SK-N-SH (cell line): ENCODE measurements at regions of chr10 and their contacts with region 1.

Region 1: DNA sequence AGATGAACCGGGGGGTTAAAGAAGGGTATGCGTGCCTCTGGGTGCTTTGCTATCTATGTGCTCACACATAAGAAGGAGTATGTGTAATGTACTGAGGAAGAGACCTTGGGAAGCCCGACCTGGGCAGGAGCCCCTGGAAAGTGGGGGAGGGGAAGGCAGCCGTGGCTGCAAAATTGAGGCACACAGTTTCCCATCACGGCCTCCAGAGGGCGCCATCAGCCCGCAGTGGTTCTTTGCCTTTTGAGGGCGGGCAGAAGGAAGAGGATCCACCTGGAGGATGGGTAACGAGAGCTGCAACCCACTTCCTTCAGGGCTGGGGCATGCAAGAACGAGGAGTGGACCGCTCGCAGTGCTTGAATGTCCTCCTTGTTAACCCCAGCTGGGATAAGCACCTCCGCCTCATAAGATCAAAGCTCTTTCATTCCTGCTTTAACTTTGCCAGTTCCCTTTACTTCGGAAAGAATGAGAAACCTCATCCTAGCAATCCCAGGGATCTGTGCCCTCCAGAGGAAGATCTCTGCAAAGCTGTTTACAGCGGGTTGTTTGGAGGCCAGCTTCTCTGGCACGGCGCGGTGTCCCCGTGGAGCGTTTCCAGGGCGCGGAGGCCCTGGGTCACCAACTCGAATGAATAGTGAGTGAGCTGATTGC is 77.9 kb downstream of the PCGF5 start:
- DNase-seq: peak; percentile 82
- H3K4me3 ChIP-seq: no peak overlapping the region
- H3K27ac ChIP-seq: no peak overlapping the region
- H3K4me1 ChIP-seq: peaks cover 9 to 18% of the 10 kb centered on the region in 2 experiments
- H3K27me3 ChIP-seq: no peaks in the 10 kb centered on the region
- CTCF ChIP-seq: peak; percentile 87
- EP300 ChIP-seq: no peak
- RAD21 ChIP-seq: peak; percentile 95

Region 2: GRCh38 chr10:91287276-91287675 is 11.1 kb before region 1 on chr10:
- CTCF ChIA-PET with region 1: interaction called, 71 read pairs
- POLR2A ChIA-PET with region 1: no interaction called
- DNase-seq: no peak
- H3K4me3 ChIP-seq: no peak overlapping the region
- H3K27ac ChIP-seq: no peak overlapping the region
- H3K4me1 ChIP-seq: no peaks in the 10 kb centered on the region; a peak in 1 of 4 replicates
- H3K27me3 ChIP-seq: no peaks in the 10 kb centered on the region
- CTCF ChIP-seq: no peak
- EP300 ChIP-seq: no peak
- RAD21 ChIP-seq: no peak

Region 3: DNA sequence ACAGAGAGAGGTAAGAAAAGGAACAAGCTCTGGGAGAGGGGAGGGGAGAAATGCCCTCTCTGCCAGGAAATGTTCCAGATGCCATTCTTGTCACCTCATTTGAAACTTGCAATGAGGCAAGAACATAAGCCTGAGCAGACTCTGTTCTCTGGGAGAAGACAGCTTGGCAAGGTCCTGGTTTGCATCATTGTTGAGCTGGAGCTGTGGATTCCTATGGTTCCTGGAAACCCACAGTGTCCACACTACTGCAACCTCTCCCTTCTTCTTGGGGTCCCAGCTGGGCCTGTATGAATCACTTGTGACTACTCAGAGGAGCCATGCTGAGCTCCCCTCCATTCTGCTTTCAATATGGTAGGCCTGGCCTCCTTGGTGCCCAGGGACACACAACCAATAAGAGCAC is 51.0 kb after region 1 on chr10:
- CTCF ChIA-PET with region 1: interaction called, 13 read pairs
- POLR2A ChIA-PET with region 1: no interaction called
- DNase-seq: no peak
- H3K4me3 ChIP-seq: no peak overlapping the region
- H3K27ac ChIP-seq: peak overlapping the region; percentile 11 to 89; a peak in 3 of 4 replicates
- H3K4me1 ChIP-seq: peaks cover 0 to 33% of the 10 kb centered on the region in 2 experiments
- H3K27me3 ChIP-seq: no peaks in the 10 kb centered on the region
- CTCF ChIP-seq: no peak
- EP300 ChIP-seq: peak; percentile 51 to 97; a peak in 3 of 4 replicates
- RAD21 ChIP-seq: no peak

Region 4: GRCh38 chr10:91381257-91381891 is 83.0 kb after region 1 on chr10:
- CTCF ChIA-PET with region 1: interaction called, 29 read pairs
- POLR2A ChIA-PET with region 1: interaction called, 3 read pairs
- DNase-seq: peak; percentile 67
- H3K4me3 ChIP-seq: peak overlapping the region; percentile 13 to 17; a peak in 3 of 4 replicates
- H3K27ac ChIP-seq: peak overlapping the region; percentile 72 to 89
- H3K4me1 ChIP-seq: peaks cover 14 to 33% of the 10 kb centered on the region in 2 experiments; a peak in 3 of 4 replicates
- H3K27me3 ChIP-seq: no peaks in the 10 kb centered on the region
- CTCF ChIP-seq: no peak
- EP300 ChIP-seq: peak; percentile 4 to 40; a peak in 3 of 4 replicates
- RAD21 ChIP-seq: peak; percentile 8; the same call in 1 of the 2 replicates

Region 5: GRCh38 chr10:91409869-91410637 is 111.7 kb after region 1 on chr10 and contains the start of gene HECTD2:
- CTCF ChIA-PET with region 1: interaction called, 15 read pairs
- POLR2A ChIA-PET with region 1: interaction called, 4 read pairs
- DNase-seq: peak; percentile 90
- H3K4me3 ChIP-seq: peak within 1 kb of the TSS; percentile 82 to 83
- H3K27ac ChIP-seq: peak within 1 kb of the TSS; percentile 96 to 99
- H3K4me1 ChIP-seq: peaks cover 3 to 22% of the 10 kb centered on the region in 2 experiments; a peak in 3 of 4 replicates
- H3K27me3 ChIP-seq: no peaks in the 10 kb centered on the region
- CTCF ChIP-seq: peak; percentile 39
- EP300 ChIP-seq: peak in 1 of 2 experiments; percentile 20; a peak in 1 of 4 replicates
- RAD21 ChIP-seq: peak; percentile 41
- polyA plus RNA-seq, gene HECTD2: 4.1 and 5.7 TPM in 2 replicates

Region 6: DNA sequence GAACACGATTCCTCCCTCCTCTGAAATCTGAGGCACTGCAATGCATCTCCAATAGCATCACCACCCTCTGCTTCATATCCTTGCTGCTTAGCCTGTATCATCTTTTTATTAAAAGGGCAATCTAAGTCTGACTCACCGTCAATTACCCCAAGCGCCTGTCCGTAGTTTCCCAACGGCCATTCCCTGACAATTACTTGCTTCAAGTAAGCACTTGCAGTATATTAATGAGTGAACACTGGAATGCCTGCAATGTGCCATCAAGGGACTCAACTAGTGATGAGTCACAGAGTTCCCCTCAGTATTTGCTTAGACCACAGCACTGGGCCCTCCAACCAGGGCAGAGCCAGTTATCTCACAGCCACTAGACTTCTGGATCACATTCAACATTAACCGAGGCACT is 354.0 kb after region 1 on chr10:
- CTCF ChIA-PET with region 1: no interaction called
- POLR2A ChIA-PET with region 1: no interaction called
- DNase-seq: no peak
- H3K4me3 ChIP-seq: no peak overlapping the region
- H3K27ac ChIP-seq: peak overlapping the region; percentile 67 to 84; a peak in 3 of 4 replicates
- H3K4me1 ChIP-seq: peaks cover 0 to 18% of the 10 kb centered on the region in 2 experiments; a peak in 2 of 4 replicates
- H3K27me3 ChIP-seq: no peaks in the 10 kb centered on the region
- CTCF ChIP-seq: no peak
- EP300 ChIP-seq: peak in 1 of 2 experiments; percentile 96; a peak in 3 of 4 replicates
- RAD21 ChIP-seq: no peak